ENCODE measurements at regions of chr6 and their contacts with region 1.

Region 1: GRCh38 chr6:150004783-150005717 is 20.3 kb downstream of the RAET1L start:
- DNase-seq: peak; percentile 94
- ATAC-seq: peak; percentile 80
- H3K4me3 Mint-ChIP-seq: peak overlapping the region; percentile 79
- H3K27ac Mint-ChIP-seq: peak overlapping the region; percentile 73
- H3K4me1 Mint-ChIP-seq: peaks cover 60% of the 10 kb centered on the region
- H3K27me3 Mint-ChIP-seq: peaks cover 19% of the 10 kb centered on the region
- CTCF ChIP-seq: no peak

Region 2: DNA sequence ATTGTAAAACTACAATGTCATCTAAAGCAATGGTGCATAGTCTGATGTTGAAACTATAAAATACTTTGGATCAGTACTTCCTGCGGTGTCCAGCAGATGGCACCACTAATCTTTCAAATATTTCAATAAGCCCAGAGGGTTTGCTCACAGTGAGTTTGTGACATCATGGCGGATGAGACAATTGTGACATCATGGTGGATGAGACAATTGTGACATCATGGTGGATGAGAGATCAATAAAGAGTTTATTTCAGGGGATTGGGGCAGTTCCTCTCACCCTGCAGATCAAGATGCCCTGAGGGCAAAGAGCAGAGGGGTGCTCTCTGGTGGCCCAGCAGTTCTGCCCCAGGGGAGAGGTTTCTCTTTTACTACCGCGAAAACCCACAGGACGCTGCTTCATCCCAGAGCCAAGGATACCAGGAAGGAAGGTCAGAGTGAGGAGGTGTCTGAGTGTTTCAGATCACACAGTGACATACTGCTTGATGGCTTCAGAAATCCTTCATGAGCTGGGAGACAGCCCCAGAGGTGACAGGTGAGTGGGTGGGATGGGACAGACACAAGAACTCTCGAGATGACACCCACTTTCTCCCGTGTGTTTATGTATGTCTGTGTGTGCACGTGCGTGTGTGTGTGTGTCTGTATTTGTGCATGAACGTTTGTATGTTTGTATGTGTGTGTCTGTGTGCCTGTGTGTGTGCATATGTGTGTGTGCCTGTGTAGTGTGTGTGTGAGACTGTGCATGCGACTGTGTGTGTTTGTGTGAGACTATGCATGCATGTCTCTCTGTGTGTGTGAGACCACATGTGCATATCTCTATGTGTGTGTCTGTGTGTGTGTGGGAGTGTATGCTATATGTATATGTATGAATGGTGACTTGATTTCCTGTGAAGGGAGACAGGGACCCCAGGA is 70.5 kb before region 1 on chr6:
- CTCF ChIA-PET with region 1: no interaction called
- POLR2A ChIA-PET with region 1: no interaction called
- intact Hi-C with region 1: loop called (anchors 5 kb)
- DNase-seq: peak; percentile 89
- ATAC-seq: peak; percentile 53
- H3K4me3 Mint-ChIP-seq: no peak overlapping the region
- H3K27ac Mint-ChIP-seq: no peak overlapping the region
- H3K4me1 Mint-ChIP-seq: peaks cover 19% of the 10 kb centered on the region
- H3K27me3 Mint-ChIP-seq: peaks cover 71% of the 10 kb centered on the region
- CTCF ChIP-seq: peak; percentile 79

Region 3: DNA sequence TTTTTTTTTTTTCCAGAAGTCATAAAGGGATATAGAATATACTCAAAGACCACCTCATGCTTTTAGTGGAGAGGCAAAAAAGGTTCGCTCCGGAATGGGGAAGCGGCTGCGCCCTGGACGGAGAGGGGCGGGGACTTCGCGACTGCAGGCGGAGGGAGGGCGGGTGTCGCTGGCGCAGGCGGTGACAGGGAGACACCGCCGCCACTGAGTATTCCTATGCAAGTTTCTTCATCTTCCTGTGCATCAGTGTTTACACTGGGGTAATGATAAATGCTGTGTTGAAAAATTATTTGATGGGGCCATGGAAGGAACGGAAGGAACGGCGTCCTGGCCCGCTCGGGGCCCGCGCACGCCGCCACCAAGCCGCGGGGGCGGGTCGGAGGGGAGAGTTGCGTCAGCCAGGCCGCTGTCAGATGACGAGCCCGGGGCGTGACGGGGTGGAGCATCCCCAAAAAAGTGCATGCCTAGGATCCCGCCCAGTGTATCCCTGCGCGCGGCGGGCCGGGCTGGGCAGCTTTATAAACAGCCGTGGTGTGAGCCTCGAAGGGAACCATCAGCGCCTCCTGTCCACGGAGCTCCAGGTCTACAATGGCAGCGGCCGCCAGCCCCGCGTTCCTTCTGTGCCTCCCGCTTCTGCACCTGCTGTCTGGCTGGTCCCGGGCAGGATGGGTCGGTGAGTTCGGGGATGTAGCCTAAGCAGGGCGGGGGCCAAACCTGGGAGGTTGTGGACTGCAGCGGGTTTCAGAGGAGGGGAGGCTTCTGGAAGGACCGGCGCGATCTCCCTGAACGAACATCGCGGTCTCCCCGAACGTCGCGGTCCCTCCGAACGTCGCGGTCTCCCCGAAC is 41.4 kb before region 1 on chr6 and contains the start of gene ULBP1:
- CTCF ChIA-PET with region 1: no interaction called
- POLR2A ChIA-PET with region 1: no interaction called
- intact Hi-C with region 1: loop called (anchors 5 kb)
- DNase-seq: peak; percentile 92
- ATAC-seq: peak; percentile 75
- H3K4me3 Mint-ChIP-seq: peak within 1 kb of the TSS; percentile 78
- H3K27ac Mint-ChIP-seq: peak within 1 kb of the TSS; percentile 84
- H3K4me1 Mint-ChIP-seq: peaks cover 31% of the 10 kb centered on the region
- H3K27me3 Mint-ChIP-seq: peaks cover 70% of the 10 kb centered on the region
- CTCF ChIP-seq: no peak
- total RNA-seq, gene ULBP1: 2.5 to 2.7 TPM

Region 4: DNA sequence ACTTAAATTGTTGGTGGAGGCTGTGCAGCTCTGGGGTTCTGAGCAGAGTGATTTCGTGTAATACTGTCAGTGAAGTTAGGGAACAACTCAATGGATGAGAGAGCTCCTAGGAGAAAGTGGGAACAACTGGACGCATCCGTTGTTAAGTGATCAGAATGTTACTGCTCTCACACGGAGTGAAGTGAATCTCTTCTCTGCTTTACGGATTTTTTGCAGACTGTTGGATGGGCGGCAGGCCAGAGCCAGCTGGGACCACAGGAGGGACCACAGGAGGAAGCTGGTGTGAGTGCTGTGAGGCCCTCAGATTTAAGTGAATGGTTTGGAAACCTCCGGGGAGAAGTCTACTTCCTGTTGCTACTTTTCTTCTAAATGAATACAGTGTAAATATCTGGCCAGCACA is 114.1 kb after region 1 on chr6:
- CTCF ChIA-PET with region 1: no interaction called
- POLR2A ChIA-PET with region 1: no interaction called
- intact Hi-C with region 1: no loop called
- DNase-seq: no peak
- ATAC-seq: no peak
- H3K4me3 Mint-ChIP-seq: no peak overlapping the region
- H3K27ac Mint-ChIP-seq: peak overlapping the region; percentile 1
- H3K4me1 Mint-ChIP-seq: peaks cover 6% of the 10 kb centered on the region
- H3K27me3 Mint-ChIP-seq: peaks cover 4% of the 10 kb centered on the region
- CTCF ChIP-seq: no peak

Region 5: GRCh38 chr6:150142670-150143515 is 137.8 kb after region 1 on chr6 and contains the start of gene PPP1R14C:
- CTCF ChIA-PET with region 1: no interaction called
- POLR2A ChIA-PET with region 1: no interaction called
- intact Hi-C with region 1: no loop called
- DNase-seq: peak; percentile 47
- ATAC-seq: peak; percentile 81
- H3K4me3 Mint-ChIP-seq: peak within 1 kb of the TSS; percentile 45
- H3K27ac Mint-ChIP-seq: no peak within 1 kb of the TSS
- H3K4me1 Mint-ChIP-seq: peaks cover 16% of the 10 kb centered on the region
- H3K27me3 Mint-ChIP-seq: peaks cover 63% of the 10 kb centered on the region
- CTCF ChIP-seq: no peak
- total RNA-seq, gene PPP1R14C: 0.65 to 0.86 TPM

Measured in activated CD8-positive, alpha-beta T cell treated with anti-CD3 and anti-CD28 coated beads for 36 hours (primary cell).